IMR-90 (cell line): ENCODE measurements at regions of chr11 and their contacts with region 1.

Region 1: DNA sequence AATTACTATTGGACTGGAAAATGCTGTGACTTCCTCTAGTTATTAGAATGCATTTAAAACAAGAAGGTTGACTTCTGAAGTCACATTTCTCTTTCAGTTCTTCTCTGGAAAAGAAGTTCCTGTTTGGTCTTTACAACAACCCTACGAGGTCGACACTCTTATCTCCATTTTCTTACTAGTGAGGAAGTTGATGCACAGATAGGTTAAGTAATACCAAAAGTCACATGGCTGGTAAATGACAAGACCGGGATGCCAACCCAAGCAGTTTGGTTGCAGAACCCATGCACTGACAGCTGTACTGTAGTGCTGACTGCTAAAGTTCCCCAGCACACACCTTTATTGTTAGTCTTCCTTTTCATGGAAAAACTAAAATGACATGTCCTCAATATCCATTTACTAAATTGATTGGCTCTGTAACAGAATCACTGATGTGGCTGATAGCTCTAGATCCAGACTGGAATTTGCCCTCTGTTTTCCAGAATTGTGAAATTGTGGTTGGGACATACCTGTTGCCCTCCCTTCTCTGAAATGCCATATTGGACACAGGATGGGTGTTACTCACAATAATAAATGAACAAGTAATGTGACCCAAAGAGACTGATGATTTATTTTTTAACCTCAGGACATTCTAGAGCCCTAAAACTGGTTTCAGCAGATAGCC is 9.4 kb upstream of the TECTA start:
- DNase-seq: no peak
- ATAC-seq: no peak
- H3K4me3 ChIP-seq: no peak overlapping the region
- H3K27ac ChIP-seq: no peak overlapping the region
- H3K4me1 ChIP-seq: no peaks in the 10 kb centered on the region
- H3K27me3 ChIP-seq: peaks cover 6% of the 10 kb centered on the region; the same call in 1 of the 2 replicates
- CTCF ChIP-seq: no peak
- POLR2A ChIP-seq: no peak
- RAD21 ChIP-seq: no peak

Region 2: GRCh38 chr11:120500414-120501071 is 591.1 kb before region 1 on chr11:
- CTCF ChIA-PET with region 1: no interaction called
- POLR2A ChIA-PET with region 1: no interaction called
- dilution Hi-C with region 1: no loop called
- in situ Hi-C with region 1: loop called (anchors 10 kb)
- intact Hi-C with region 1: no loop called
- DNase-seq: no peak
- ATAC-seq: peak; percentile 10; the same call in 1 of the 2 replicates
- H3K4me3 ChIP-seq: no peak overlapping the region
- H3K27ac ChIP-seq: no peak overlapping the region
- H3K4me1 ChIP-seq: no peaks in the 10 kb centered on the region
- H3K27me3 ChIP-seq: no peaks in the 10 kb centered on the region
- CTCF ChIP-seq: no peak
- POLR2A ChIP-seq: no peak
- RAD21 ChIP-seq: no peak